Activated naive CD4-positive, alpha-beta T cell treated with anti-CD3 and anti-CD28 coated beads, Interleukin-2, amount 10 ng/mL, durations not matched to agents 7 days and 5 days (primary cell): ENCODE measurements at regions of chr20 and their contacts with region 1.

Region 1: GRCh38 chr20:45138561-45139300 is 14.5 kb upstream of the WFDC12 start:
- DNase-seq: peak; percentile 79
- H3K4me3 Mint-ChIP-seq: no peak overlapping the region
- H3K27ac Mint-ChIP-seq: no peak overlapping the region
- H3K4me1 Mint-ChIP-seq: no peaks in the 10 kb centered on the region
- H3K27me3 Mint-ChIP-seq: peaks cover 24% of the 10 kb centered on the region

Region 2: GRCh38 chr20:44924570-44924969 is 214.2 kb before region 1 on chr20:
- CTCF ChIA-PET with region 1: no interaction called
- DNase-seq: no peak
- H3K4me3 Mint-ChIP-seq: no peak overlapping the region
- H3K27ac Mint-ChIP-seq: no peak overlapping the region
- H3K4me1 Mint-ChIP-seq: no peaks in the 10 kb centered on the region
- H3K27me3 Mint-ChIP-seq: no peaks in the 10 kb centered on the region

Region 3: GRCh38 chr20:45032781-45033180 is 106.0 kb before region 1 on chr20:
- CTCF ChIA-PET with region 1: no interaction called
- DNase-seq: no peak
- H3K4me3 Mint-ChIP-seq: no peak overlapping the region
- H3K27ac Mint-ChIP-seq: no peak overlapping the region
- H3K4me1 Mint-ChIP-seq: peaks cover 44% of the 10 kb centered on the region
- H3K27me3 Mint-ChIP-seq: no peaks in the 10 kb centered on the region

Region 4: GRCh38 chr20:45128071-45128470 is 10.7 kb before region 1 on chr20:
- CTCF ChIA-PET with region 1: interaction called, 11 read pairs
- DNase-seq: no peak
- H3K4me3 Mint-ChIP-seq: no peak overlapping the region
- H3K27ac Mint-ChIP-seq: no peak overlapping the region
- H3K4me1 Mint-ChIP-seq: no peaks in the 10 kb centered on the region
- H3K27me3 Mint-ChIP-seq: peaks cover 33% of the 10 kb centered on the region